T-cell (primary cell): ENCODE measurements at regions of chr2 and their contacts with region 1.

Region 1: GRCh38 chr2:48398285-48399002 is 131.5 kb upstream of the STON1 start:
- DNase-seq: no peak
- ATAC-seq: no peak
- H3K4me3 ChIP-seq: no peak overlapping the region
- H3K4me3 Mint-ChIP-seq: no peak overlapping the region
- H3K27ac ChIP-seq: no peak overlapping the region
- H3K27ac Mint-ChIP-seq: no peak overlapping the region
- H3K4me1 ChIP-seq: peaks cover 7 to 8% of the 10 kb centered on the region in 2 experiments
- H3K4me1 Mint-ChIP-seq: peaks cover 9 to 13% (median 12%) of the 10 kb centered on the region in 3 donors
- H3K27me3 ChIP-seq: no peaks in the 10 kb centered on the region
- H3K27me3 Mint-ChIP-seq: no peaks in the 10 kb centered on the region

Region 2: DNA sequence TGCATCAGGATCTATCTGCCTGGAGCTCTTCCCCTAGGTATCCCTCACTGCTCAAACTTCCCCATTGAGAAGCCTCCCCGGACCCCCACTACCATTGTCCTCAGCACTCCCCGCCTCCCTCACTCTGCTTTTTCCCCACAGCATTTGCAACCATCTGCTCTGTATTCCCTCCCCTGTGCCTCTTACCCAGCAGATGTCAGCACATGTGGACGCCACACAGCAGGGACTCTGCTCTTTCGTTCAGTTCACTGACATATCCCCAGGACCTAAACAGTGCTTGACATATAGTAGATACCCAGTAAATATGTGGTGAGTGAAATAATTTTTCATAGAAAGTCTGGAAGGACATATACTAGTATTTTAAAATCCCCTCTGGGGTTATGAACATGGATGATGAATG is 1818.0 kb before region 1 on chr2:
- CTCF ChIA-PET with region 1: interaction called in 1 of 2 experiments, 10 read pairs
- POLR2A ChIA-PET with region 1: no interaction called
- DNase-seq: no peak
- ATAC-seq: no peak
- H3K4me3 ChIP-seq: no peak overlapping the region
- H3K4me3 Mint-ChIP-seq: no peak overlapping the region
- H3K27ac ChIP-seq: no peak overlapping the region
- H3K27ac Mint-ChIP-seq: no peak overlapping the region
- H3K4me1 ChIP-seq: no peaks in the 10 kb centered on the region
- H3K4me1 Mint-ChIP-seq: no peaks in the 10 kb centered on the region
- H3K27me3 ChIP-seq: no peaks in the 10 kb centered on the region
- H3K27me3 Mint-ChIP-seq: no peaks in the 10 kb centered on the region

Region 3: DNA sequence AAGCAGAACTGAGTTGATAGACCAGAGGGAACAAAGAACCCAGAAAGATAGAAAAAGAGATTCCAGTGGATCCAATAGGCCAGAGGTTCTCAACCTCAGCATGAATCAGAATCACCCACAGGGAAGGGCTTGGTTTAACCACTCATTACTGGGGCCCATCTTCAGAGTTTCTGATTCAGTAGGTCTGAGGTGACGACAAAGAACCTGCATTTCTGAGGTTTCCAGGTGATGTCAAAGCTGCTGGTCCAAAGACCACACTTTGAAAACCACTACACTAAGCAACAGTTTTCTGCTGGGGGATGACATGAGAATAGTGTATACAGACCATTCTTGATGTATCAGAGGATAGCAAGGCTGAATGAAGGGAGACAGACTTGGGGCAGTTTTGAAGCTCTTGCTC is 165.4 kb before region 1 on chr2:
- CTCF ChIA-PET with region 1: no interaction called
- POLR2A ChIA-PET with region 1: interaction called in 1 of 2 experiments, 10 read pairs
- DNase-seq: no peak
- ATAC-seq: no peak
- H3K4me3 ChIP-seq: no peak overlapping the region
- H3K4me3 Mint-ChIP-seq: no peak overlapping the region
- H3K27ac ChIP-seq: no peak overlapping the region
- H3K27ac Mint-ChIP-seq: peak overlapping the region in 1 of 2 donors; percentile 28
- H3K4me1 ChIP-seq: peaks cover 6 to 15% of the 10 kb centered on the region in 2 experiments
- H3K4me1 Mint-ChIP-seq: peaks cover 14 to 22% (median 17%) of the 10 kb centered on the region in 3 donors
- H3K27me3 ChIP-seq: no peaks in the 10 kb centered on the region
- H3K27me3 Mint-ChIP-seq: no peaks in the 10 kb centered on the region

Region 4: DNA sequence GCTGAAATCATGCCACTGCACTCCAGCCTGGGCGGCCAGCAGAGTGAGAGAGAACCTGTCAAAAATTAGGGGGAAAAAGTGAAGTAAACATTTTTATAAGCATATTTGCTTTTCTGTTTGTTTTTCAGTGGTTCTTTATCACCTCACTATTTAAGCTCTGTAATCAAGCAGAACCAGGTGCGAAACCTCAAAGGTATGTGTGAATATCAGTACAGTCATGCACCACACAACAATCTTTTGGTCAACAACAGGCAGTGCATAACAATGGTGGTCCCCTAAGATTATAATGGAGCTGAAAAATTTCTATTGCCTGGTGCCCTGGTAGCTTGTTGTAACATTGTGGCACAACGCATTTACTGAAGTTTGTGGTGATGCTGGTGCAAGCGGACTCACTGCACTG is 35.9 kb before region 1 on chr2:
- CTCF ChIA-PET with region 1: no interaction called
- POLR2A ChIA-PET with region 1: no interaction called
- DNase-seq: peak in 2 of 35 experiments; percentile 5 to 26
- ATAC-seq: peak in 1 of 4 experiments; percentile 48
- H3K4me3 ChIP-seq: no peak overlapping the region
- H3K4me3 Mint-ChIP-seq: peak overlapping the region in 1 of 3 donors; percentile 17
- H3K27ac ChIP-seq: no peak overlapping the region
- H3K27ac Mint-ChIP-seq: no peak overlapping the region
- H3K4me1 ChIP-seq: peaks cover 14 to 19% of the 10 kb centered on the region in 2 experiments
- H3K4me1 Mint-ChIP-seq: peaks cover 33 to 50% (median 45%) of the 10 kb centered on the region in 3 donors
- H3K27me3 ChIP-seq: no peaks in the 10 kb centered on the region
- H3K27me3 Mint-ChIP-seq: no peaks in the 10 kb centered on the region

Region 5: GRCh38 chr2:48488545-48488944 is 90.1 kb after region 1 on chr2:
- CTCF ChIA-PET with region 1: no interaction called
- POLR2A ChIA-PET with region 1: no interaction called
- DNase-seq: no peak
- ATAC-seq: no peak
- H3K4me3 ChIP-seq: no peak overlapping the region
- H3K4me3 Mint-ChIP-seq: no peak overlapping the region
- H3K27ac ChIP-seq: no peak overlapping the region
- H3K27ac Mint-ChIP-seq: no peak overlapping the region
- H3K4me1 ChIP-seq: no peaks in the 10 kb centered on the region
- H3K4me1 Mint-ChIP-seq: peaks cover 0 to 2% (median 0%) of the 10 kb centered on the region in 3 donors
- H3K27me3 ChIP-seq: no peaks in the 10 kb centered on the region
- H3K27me3 Mint-ChIP-seq: no peaks in the 10 kb centered on the region

Region 6: GRCh38 chr2:48694149-48694548 is 295.7 kb after region 1 on chr2:
- CTCF ChIA-PET with region 1: no interaction called
- POLR2A ChIA-PET with region 1: no interaction called
- DNase-seq: no peak
- ATAC-seq: no peak
- H3K4me3 ChIP-seq: no peak overlapping the region
- H3K4me3 Mint-ChIP-seq: no peak overlapping the region
- H3K27ac ChIP-seq: no peak overlapping the region
- H3K27ac Mint-ChIP-seq: no peak overlapping the region
- H3K4me1 ChIP-seq: no peaks in the 10 kb centered on the region
- H3K4me1 Mint-ChIP-seq: no peaks in the 10 kb centered on the region
- H3K27me3 ChIP-seq: no peaks in the 10 kb centered on the region
- H3K27me3 Mint-ChIP-seq: peaks cover 5 to 7% of the 10 kb centered on the region in 2 donors